ENCODE measurements at regions of chr1 and their contacts with region 1.

Region 1: DNA sequence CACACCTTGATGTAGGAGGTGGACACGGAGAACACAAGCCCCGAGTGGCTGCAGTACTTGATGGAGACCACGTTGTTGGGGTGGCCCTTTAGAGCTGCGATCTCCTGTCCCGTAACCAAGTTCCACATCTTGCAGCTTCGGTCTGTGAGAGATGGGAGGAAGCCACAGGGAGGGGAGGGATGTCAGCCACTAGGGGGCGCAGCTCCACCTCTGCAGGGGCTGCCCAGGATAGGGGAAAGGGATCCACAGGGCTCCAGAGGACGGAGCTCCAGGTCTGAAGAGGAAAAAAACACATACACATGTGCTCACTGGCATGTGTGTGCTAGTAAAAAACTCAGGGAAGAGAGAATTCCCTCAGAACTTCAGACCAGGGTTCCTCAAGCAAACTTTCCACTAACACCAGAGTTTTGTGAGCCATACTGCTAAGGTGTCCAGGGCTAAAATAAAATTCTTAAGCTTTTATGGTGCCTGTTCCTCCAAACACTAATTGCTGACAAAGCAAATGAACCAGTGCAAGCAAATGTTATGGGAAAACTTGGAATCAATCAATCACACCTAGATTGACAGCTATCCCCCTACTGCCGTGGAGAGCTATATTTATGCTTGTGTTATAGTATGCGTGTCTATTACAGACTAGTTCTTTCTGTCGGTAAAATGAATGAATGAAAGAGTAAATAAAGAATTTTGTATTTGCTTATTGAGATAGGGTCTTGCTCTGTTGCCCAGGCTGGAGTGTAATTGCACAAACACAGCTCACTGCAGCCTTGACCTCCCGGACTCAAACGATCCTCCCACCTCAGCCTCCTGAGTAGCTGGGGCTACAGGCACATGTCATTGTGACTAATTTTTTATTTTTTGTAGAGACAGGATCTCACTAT is 43.7 kb downstream of the KIF21B start:
- DNase-seq: peak; percentile 79
- ATAC-seq: peak; percentile 69
- H3K4me3 Mint-ChIP-seq: no peak overlapping the region
- H3K27ac Mint-ChIP-seq: no peak overlapping the region
- H3K4me1 Mint-ChIP-seq: no peaks in the 10 kb centered on the region
- H3K27me3 Mint-ChIP-seq: no peaks in the 10 kb centered on the region
- CTCF ChIP-seq: peak; percentile 87

Region 2: DNA sequence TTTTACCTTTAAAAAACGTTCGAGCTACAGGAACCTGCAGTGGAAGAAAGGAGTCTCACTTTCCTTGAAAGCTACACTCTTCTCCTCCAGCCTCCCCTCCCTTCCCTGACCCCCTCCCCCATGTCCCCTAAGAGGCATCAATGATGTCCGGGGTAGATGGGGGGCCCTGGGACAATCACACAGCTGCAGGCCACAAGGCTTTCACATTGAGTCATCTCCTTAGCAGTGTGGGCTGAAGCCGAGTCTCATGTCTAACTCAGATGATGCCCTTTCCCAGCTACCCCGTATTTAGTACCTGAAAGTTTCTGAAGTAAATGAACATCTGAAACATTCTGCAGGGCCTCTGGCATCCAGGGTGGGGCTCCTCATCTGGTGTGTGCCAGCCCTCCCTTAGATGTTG is 113.3 kb before region 1 on chr1:
- CTCF ChIA-PET with region 1: no interaction called
- POLR2A ChIA-PET with region 1: no interaction called
- intact Hi-C with region 1: no loop called
- DNase-seq: peak; percentile 92
- ATAC-seq: peak; percentile 86
- H3K4me3 Mint-ChIP-seq: no peak overlapping the region
- H3K27ac Mint-ChIP-seq: no peak overlapping the region
- H3K4me1 Mint-ChIP-seq: peaks cover 55% of the 10 kb centered on the region
- H3K27me3 Mint-ChIP-seq: peaks cover 14% of the 10 kb centered on the region
- CTCF ChIP-seq: no peak

Region 3: DNA sequence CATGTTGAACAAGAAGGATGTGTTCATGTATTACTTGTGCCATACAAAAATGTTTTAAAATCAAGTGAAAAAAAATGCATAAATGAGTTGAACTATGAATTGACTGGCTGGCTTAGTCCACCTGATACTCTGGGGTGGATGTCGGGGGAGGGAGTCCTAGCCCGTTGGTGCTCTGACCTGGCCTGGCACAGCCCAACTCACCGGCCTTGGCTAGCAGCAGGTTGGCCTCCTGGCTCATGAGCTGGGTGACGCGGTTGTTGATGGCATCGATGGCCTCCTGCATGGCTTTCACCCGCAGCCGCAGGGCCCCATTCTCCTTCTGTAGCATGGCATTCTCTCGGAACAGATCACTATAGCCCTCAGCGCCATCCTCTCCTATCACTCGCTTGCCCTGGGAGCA is 22.1 kb after region 1 on chr1:
- CTCF ChIA-PET with region 1: interaction called, 10 read pairs
- POLR2A ChIA-PET with region 1: interaction called, 3 read pairs
- intact Hi-C with region 1: no loop called
- DNase-seq: no peak
- ATAC-seq: no peak
- H3K4me3 Mint-ChIP-seq: no peak overlapping the region
- H3K27ac Mint-ChIP-seq: peak overlapping the region; percentile 55
- H3K4me1 Mint-ChIP-seq: peaks cover 21% of the 10 kb centered on the region
- H3K27me3 Mint-ChIP-seq: no peaks in the 10 kb centered on the region
- CTCF ChIP-seq: no peak

Region 4: DNA sequence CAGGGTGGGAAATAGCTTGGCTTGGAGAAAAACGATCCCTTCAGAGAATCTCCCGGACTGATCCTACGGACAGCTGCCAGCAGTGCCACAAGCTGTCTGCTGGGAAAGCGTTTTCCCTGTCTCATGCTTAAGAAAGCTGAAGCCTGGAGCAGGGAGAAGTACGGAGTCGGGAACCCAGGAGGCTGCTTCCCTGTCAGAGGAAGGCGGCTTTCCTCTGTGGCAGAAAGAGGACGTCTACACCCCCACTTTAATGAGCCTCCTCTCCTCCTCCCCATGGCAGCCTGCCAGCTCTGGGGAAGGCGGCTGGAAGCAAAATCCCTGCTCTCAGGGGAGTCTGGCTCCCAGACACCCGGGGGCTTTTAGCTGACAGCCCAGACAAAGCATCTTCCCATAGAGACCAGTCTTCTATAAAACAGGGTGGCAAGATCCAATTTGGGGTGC is 36.4 kb after region 1 on chr1:
- CTCF ChIA-PET with region 1: interaction called, 109 read pairs
- POLR2A ChIA-PET with region 1: interaction called, 6 read pairs
- intact Hi-C with region 1: no loop called
- DNase-seq: no peak
- ATAC-seq: no peak
- H3K4me3 Mint-ChIP-seq: peak overlapping the region; percentile 68
- H3K27ac Mint-ChIP-seq: peak overlapping the region; percentile 97
- H3K4me1 Mint-ChIP-seq: peaks cover 92% of the 10 kb centered on the region
- H3K27me3 Mint-ChIP-seq: no peaks in the 10 kb centered on the region
- CTCF ChIP-seq: no peak

Region 5: DNA sequence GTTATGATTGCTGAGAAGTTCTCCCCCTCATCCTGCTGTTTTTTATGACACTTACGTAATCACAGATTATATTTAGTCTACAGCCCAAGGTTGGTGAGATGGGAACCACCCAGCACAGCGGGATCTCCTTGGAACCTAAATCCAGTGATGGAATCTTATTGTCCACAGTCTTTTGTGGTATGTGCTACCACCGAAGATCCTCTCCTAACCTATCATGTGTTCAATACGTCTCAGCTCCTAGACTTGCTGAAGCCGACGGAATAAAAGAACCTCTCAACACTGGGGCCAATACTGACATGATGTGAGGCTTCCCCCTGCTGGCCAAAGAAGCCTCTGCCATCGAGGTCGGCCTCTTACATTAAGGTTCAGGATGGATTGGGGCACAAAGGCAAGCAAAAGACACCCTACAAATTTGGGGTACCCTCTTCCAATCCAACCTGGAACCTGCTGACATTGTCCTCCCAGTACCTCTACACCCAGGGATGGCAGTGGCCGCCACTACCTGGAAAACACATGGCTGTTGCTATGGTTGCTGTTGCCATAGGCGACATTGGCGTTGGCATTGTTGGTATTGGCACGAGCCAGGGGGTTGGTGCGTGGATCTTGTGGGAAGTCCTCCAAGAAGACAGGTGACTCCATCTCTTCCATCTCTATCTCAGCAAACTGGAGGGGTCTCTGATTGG is 63.1 kb after region 1 on chr1:
- CTCF ChIA-PET with region 1: interaction called, 363 read pairs
- POLR2A ChIA-PET with region 1: interaction called, 5 read pairs
- intact Hi-C with region 1: loop called (anchors 2 kb)
- DNase-seq: peak; percentile 86
- ATAC-seq: peak; percentile 97
- H3K4me3 Mint-ChIP-seq: no peak overlapping the region
- H3K27ac Mint-ChIP-seq: no peak overlapping the region
- H3K4me1 Mint-ChIP-seq: peaks cover 2% of the 10 kb centered on the region
- H3K27me3 Mint-ChIP-seq: no peaks in the 10 kb centered on the region
- CTCF ChIP-seq: peak; percentile 77

Region 6: GRCh38 chr1:201114236-201115131 is 134.7 kb after region 1 on chr1:
- CTCF ChIA-PET with region 1: interaction called, 20 read pairs
- POLR2A ChIA-PET with region 1: no interaction called
- intact Hi-C with region 1: loop called (anchors 10 kb)
- DNase-seq: peak; percentile 88
- ATAC-seq: peak; percentile 93
- H3K4me3 Mint-ChIP-seq: peak overlapping the region; percentile 86
- H3K27ac Mint-ChIP-seq: peak overlapping the region; percentile 81
- H3K4me1 Mint-ChIP-seq: peaks cover 2% of the 10 kb centered on the region
- H3K27me3 Mint-ChIP-seq: no peaks in the 10 kb centered on the region
- CTCF ChIP-seq: peak; percentile 87

Measured in activated CD8-positive, alpha-beta T cell treated with anti-CD3 and anti-CD28 coated beads for 36 hours (primary cell).